Endothelial cell of umbilical vein (primary cell): ENCODE measurements at regions of chr3 and their contacts with region 1.

Region 1: DNA sequence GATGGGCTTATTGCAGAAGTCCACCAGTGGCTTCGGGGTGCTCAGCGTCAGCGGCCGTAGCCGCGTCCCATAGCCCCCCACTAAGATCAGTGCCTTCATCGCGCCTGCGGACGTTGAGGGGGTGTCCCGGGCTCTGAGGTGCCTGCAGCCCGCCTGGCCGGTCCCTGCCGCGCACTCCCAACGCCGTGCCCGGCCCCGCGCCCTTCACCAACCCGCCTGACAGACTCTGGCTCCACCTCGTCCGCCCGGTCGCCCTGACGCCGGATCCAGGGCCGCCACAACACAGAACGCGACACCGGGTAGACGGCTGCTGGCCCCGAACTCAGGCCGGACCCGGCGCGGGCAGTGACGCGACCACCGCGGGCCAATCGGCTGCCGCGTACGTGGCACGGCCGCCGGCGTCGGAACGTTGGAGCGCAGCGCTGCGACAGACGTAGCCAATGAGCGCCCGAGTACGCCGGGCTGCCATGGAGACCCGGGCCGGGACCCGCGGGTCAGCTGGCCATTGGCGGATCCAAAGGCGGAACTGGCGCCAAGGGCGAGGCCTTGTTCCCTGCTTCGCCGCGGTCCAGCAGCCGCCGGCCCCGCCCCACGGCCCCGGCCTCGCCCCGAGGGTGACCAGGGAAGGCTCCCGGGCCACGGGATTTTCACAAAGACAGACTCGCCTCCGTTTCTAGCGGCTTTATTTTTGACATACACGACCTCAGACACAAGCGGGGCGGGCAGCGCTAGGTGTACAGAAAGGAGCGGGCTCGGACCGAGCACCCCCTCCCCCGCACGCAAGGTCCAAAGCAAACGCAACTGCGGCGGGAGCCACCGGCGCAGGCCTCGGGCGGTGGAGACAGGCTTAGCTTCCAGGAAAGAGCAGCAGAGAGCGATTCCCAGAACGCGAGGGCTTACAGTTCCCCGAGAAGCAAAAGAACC is at the start of gene GMPPB:
- DNase-seq: peak; percentile 98
- H3K4me3 ChIP-seq: peak within 1 kb of the TSS; percentile 59 to 85 (median 81)
- H3K27ac ChIP-seq: peak within 1 kb of the TSS; percentile 84
- H3K4me1 ChIP-seq: peaks cover 16% of the 10 kb centered on the region
- H3K27me3 ChIP-seq: no peaks in the 10 kb centered on the region
- CTCF ChIP-seq: no peak
- POLR2A ChIP-seq: peak; percentile 80
- total RNA-seq, gene GMPPB: 52.5 and 54.5 TPM in 2 replicates

Region 2: GRCh38 chr3:49461443-49462171 is 262.3 kb before region 1 on chr3:
- CTCF ChIA-PET with region 1: no interaction called
- POLR2A ChIA-PET with region 1: no interaction called
- dilution Hi-C with region 1: no loop called
- intact Hi-C with region 1: no loop called
- DNase-seq: no peak
- H3K4me3 ChIP-seq: no peak overlapping the region
- H3K27ac ChIP-seq: no peak overlapping the region
- H3K4me1 ChIP-seq: no peaks in the 10 kb centered on the region
- H3K27me3 ChIP-seq: no peaks in the 10 kb centered on the region
- CTCF ChIP-seq: no peak
- POLR2A ChIP-seq: no peak

Region 3: GRCh38 chr3:49638445-49638844 is 85.4 kb before region 1 on chr3:
- CTCF ChIA-PET with region 1: no interaction called
- POLR2A ChIA-PET with region 1: no interaction called
- dilution Hi-C with region 1: no loop called
- intact Hi-C with region 1: no loop called
- DNase-seq: no peak
- H3K4me3 ChIP-seq: no peak overlapping the region
- H3K27ac ChIP-seq: no peak overlapping the region
- H3K4me1 ChIP-seq: no peaks in the 10 kb centered on the region
- H3K27me3 ChIP-seq: peaks cover 0 to 2% of the 10 kb centered on the region in 2 experiments
- CTCF ChIP-seq: no peak
- POLR2A ChIP-seq: no peak

Region 4: GRCh38 chr3:49786241-49786958 is 62.5 kb after region 1 on chr3 and contains the start of gene IP6K1:
- CTCF ChIA-PET with region 1: no interaction called
- POLR2A ChIA-PET with region 1: no interaction called
- dilution Hi-C with region 1: no loop called
- intact Hi-C with region 1: loop called (anchors 1 kb)
- DNase-seq: peak; percentile 100
- H3K4me3 ChIP-seq: peak within 1 kb of the TSS; percentile 74 to 85 (median 80)
- H3K27ac ChIP-seq: peak within 1 kb of the TSS; percentile 38
- H3K4me1 ChIP-seq: peaks cover 11% of the 10 kb centered on the region
- H3K27me3 ChIP-seq: no peaks in the 10 kb centered on the region
- CTCF ChIP-seq: no peak
- POLR2A ChIP-seq: peak; percentile 82
- total RNA-seq, gene IP6K1: 54.6 and 60.8 TPM in 2 replicates

Region 5: DNA sequence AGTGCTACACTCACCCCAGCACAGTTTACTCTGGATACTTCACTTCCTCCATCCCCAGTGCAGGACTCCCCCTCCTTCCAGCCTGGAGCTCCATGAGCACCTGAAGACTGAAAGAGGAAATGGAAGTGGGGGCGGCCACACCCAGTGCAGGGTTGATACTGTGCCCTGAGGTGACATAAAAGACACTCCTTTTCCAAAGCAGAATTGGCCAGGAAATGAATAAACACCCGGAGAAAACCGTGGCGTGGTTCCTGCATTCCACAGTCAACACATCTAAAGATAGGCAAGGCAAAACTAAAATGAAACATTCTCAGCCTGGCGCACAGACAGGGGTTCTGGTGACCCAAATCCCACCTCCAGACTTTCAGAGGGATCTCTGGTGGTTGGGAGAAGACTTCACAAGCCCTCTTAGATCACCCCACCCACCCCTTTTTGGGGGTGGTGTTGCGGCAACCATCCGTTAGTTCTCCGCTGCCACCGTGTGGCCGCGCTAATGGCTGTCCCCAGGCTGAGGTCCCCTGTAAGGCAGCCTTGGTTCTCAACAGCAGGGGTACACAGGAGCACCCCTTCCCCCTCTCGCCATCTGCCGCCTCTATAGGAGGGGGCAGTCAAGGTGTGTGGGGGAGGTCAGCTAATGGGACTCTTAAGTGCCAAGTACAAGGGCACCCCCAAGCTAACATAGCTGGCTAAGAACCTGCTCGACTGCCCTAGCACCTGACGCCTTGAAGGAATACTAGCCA is 182.3 kb after region 1 on chr3:
- CTCF ChIA-PET with region 1: interaction called, 6 read pairs
- POLR2A ChIA-PET with region 1: no interaction called
- dilution Hi-C with region 1: no loop called
- intact Hi-C with region 1: loop called (anchors 2 kb)
- DNase-seq: peak; percentile 64
- H3K4me3 ChIP-seq: peak overlapping the region in 1 of 3 experiments; percentile 41
- H3K27ac ChIP-seq: no peak overlapping the region
- H3K4me1 ChIP-seq: peaks cover 14% of the 10 kb centered on the region
- H3K27me3 ChIP-seq: no peaks in the 10 kb centered on the region
- CTCF ChIP-seq: peak; percentile 63 to 80
- POLR2A ChIP-seq: no peak

Region 6: DNA sequence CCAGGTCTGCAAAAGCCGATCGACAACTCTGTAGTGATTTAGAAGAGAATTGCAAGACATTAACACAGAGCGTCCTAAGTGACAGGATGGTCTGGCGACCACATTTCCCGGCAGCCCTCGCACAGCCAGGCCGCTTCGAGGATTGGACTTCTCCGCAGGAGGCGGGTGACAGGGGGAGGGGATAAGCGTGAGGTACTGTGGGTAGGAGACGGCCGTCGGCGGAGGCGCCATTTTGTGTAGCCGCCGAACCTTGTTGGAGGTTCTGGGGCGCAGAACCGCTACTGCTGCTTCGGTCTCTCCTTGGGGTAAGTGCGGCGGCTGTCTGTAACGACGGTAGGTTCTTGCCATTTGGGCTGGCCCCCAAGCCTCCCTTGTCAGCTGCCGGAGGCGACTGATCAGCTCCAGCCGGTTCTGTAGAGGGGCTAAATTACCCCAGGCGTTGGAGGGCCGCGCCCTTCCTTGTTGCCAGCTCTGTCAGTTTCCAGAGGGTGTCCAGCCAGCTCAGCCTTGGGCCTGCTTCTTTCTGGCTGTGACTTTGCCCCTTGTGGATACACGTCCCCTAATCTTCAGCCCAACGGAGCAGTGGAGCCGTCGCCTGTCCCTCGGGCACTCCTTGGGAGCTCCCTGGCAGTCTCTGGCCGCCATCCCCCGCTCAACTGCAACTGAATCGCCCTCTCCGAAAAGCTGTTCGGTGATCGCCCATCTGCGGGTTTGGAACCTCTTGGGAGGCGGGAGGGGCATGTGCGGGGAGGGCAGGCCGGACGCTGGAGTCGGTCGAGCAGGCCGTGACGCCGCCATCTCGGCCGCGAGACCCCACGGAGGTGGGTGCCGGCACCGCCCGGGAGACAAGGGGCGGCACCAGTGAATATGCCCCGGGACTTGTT is 365.1 kb after region 1 on chr3 and contains the start of gene RBM5:
- CTCF ChIA-PET with region 1: no interaction called
- POLR2A ChIA-PET with region 1: no interaction called
- dilution Hi-C with region 1: no loop called
- intact Hi-C with region 1: loop called (anchors 10 kb)
- DNase-seq: peak; percentile 92
- H3K4me3 ChIP-seq: peak within 1 kb of the TSS; percentile 62 to 82 (median 82)
- H3K27ac ChIP-seq: peak within 1 kb of the TSS; percentile 90
- H3K4me1 ChIP-seq: peaks cover 14% of the 10 kb centered on the region
- H3K27me3 ChIP-seq: no peaks in the 10 kb centered on the region
- CTCF ChIP-seq: no peak
- POLR2A ChIP-seq: peak; percentile 89
- total RNA-seq, gene RBM5: 188 and 190 TPM in 2 replicates